ENCODE measurements at regions of chr11 and their contacts with region 1.

Region 1: GRCh38 chr11:62753736-62754603 is at the start of gene ZBTB3:
- DNase-seq: peak; percentile 99
- H3K4me3 ChIP-seq: peak within 1 kb of the TSS; percentile 68 to 98
- H3K4me3 Mint-ChIP-seq: peak within 1 kb of the TSS; percentile 96 to 99 (median 98)
- H3K27ac ChIP-seq: peak within 1 kb of the TSS; percentile 90
- H3K27ac Mint-ChIP-seq: peak within 1 kb of the TSS; percentile 94 to 100 (median 99)
- H3K4me1 ChIP-seq: peaks cover 45% of the 10 kb centered on the region
- H3K4me1 Mint-ChIP-seq: peaks cover 15 to 41% (median 25%) of the 10 kb centered on the region in 4 donors
- H3K27me3 ChIP-seq: no peaks in the 10 kb centered on the region
- H3K27me3 Mint-ChIP-seq: no peaks in the 10 kb centered on the region
- total RNA-seq, gene ZBTB3: 27.2 to 27.9 TPM

Region 2: GRCh38 chr11:62567018-62567633 is 186.8 kb before region 1 on chr11:
- CTCF ChIA-PET with region 1: no interaction called
- POLR2A ChIA-PET with region 1: no interaction called
- intact Hi-C with region 1: no loop called
- DNase-seq: no peak
- H3K4me3 ChIP-seq: no peak overlapping the region
- H3K4me3 Mint-ChIP-seq: peak overlapping the region in 2 of 8 donors; percentile 28 to 73
- H3K27ac ChIP-seq: peak overlapping the region; percentile 15
- H3K27ac Mint-ChIP-seq: peak overlapping the region; percentile 51 to 85 (median 81)
- H3K4me1 ChIP-seq: peaks cover 38% of the 10 kb centered on the region
- H3K4me1 Mint-ChIP-seq: peaks cover 25 to 51% (median 38%) of the 10 kb centered on the region in 4 donors
- H3K27me3 ChIP-seq: no peaks in the 10 kb centered on the region
- H3K27me3 Mint-ChIP-seq: no peaks in the 10 kb centered on the region

Region 3: DNA sequence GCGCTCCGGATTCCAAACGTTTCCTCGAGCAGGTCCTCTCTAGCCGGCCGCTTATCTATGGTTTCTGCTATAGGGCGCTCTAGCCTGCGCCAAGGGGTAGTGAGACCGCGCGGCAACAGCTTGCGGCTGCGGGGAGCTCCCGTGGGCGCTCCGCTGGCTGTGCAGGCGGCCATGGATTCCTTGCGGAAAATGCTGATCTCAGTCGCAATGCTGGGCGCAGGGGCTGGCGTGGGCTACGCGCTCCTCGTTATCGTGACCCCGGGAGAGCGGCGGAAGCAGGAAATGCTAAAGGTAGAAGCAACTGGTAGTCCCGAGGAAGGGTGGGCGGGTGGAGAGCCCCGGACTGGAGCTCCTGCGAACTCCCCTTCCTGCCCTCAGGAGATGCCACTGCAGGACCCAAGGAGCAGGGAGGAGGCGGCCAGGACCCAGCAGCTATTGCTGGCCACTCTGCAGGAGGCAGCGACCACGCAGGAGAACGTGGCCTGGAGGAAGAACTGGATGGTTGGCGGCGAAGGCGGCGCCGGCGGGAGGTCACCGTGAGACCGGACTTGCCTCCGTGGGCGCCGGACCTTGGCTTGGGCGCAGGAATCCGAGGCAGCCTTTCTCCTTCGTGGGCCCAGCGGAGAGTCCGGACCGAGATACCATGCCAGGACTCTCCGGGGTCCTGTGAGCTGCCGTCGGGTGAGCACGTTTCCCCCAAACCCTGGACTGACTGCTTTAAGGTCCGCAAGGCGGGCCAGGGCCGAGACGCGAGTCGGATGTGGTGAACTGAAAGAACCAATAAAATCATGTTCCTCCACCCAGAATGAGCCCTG is 82.2 kb before region 1 on chr11 and contains the starts of genes LBHD1 and UQCC3:
- CTCF ChIA-PET with region 1: no interaction called
- POLR2A ChIA-PET with region 1: interaction called, 19 read pairs
- intact Hi-C with region 1: no loop called
- DNase-seq: peak; percentile 68 to 80 (median 75)
- H3K4me3 ChIP-seq: peak within 1 kb of the TSS; percentile 91 to 97
- H3K4me3 Mint-ChIP-seq: peak within 1 kb of the TSS; percentile 93 to 99 (median 99)
- H3K27ac ChIP-seq: peak within 1 kb of the TSS; percentile 74
- H3K27ac Mint-ChIP-seq: peak within 1 kb of the TSS; percentile 89 to 98 (median 97)
- H3K4me1 ChIP-seq: peaks cover 55% of the 10 kb centered on the region
- H3K4me1 Mint-ChIP-seq: peaks cover 14 to 74% (median 43%) of the 10 kb centered on the region in 4 donors
- H3K27me3 ChIP-seq: no peaks in the 10 kb centered on the region
- H3K27me3 Mint-ChIP-seq: no peaks in the 10 kb centered on the region
- total RNA-seq, gene LBHD1: 26.7 to 28.6 TPM
- total RNA-seq, gene UQCC3: 7.2 to 8.5 TPM

Region 4: DNA sequence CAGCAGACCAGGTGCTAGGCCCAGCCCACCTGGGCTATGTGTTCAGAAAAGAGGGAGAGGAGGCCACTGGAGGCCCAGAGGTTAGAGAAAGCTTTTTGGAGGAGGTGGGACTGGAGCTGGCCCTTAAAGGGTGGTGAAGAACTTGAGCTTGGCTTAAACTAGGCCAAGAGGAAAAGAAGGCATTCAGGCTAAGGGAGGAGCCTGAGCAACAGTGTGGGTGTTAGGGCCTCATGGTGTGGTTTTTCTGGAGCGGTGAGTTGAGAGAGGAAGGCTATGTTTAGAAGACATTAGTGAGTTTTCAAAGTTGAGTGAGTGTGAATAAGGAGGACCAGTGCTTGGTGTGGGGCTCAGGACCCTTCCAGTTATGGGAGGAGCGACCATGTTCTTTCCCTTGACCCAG is 23.4 kb after region 1 on chr11:
- CTCF ChIA-PET with region 1: interaction called, 4 read pairs
- POLR2A ChIA-PET with region 1: interaction called, 62 read pairs
- intact Hi-C with region 1: no loop called
- DNase-seq: no peak
- H3K4me3 ChIP-seq: no peak overlapping the region
- H3K4me3 Mint-ChIP-seq: peak overlapping the region in 1 of 8 donors; percentile 15
- H3K27ac ChIP-seq: peak overlapping the region; percentile 0
- H3K27ac Mint-ChIP-seq: peak overlapping the region in 6 of 7 donors; percentile 18 to 88 (median 78)
- H3K4me1 ChIP-seq: peaks cover 2% of the 10 kb centered on the region
- H3K4me1 Mint-ChIP-seq: peaks cover 5 to 10% (median 8%) of the 10 kb centered on the region in 4 donors
- H3K27me3 ChIP-seq: no peaks in the 10 kb centered on the region
- H3K27me3 Mint-ChIP-seq: no peaks in the 10 kb centered on the region

Region 5: DNA sequence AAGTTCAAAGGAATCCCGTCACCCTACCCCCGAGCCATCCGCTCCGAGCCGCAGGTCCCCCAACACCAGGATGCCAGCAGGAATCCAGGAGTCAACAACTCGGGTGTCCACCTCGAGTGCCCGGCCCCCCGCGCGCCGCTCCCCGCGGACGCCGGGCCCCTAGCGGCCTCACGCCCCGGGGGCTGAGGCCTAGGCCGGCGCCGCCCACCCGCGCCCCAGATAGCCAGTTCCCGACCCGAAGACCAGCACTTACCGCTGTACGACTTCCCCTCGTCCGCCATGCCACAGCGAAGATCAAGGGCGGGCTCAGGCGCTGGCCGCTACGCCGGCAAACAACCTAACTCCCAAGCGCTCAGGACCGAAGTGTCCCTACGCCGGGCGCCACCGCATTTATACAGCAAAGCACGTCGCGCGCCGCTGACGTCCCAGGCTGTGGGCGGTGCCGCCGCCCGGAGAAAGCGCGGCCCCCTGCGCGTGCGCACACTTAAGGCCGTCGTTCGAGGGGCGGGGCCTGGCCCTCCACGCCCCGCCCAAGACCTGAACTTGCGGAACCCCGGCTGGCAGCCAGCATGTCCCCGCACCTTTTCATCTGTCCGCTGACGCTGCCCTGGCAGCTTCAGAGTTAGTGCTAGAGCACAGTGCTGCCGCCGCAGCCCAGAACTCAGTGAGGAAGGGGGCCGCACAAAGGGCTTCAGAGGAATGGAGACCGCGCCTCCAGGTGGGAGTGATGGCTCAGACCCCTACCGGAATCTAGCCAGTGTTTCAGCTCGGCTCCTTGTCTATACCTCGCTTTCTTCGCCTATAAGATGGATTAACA is 51.3 kb after region 1 on chr11 and contains the start of gene NXF1:
- CTCF ChIA-PET with region 1: no interaction called
- POLR2A ChIA-PET with region 1: interaction called, 8 read pairs
- intact Hi-C with region 1: loop called (anchors 1 kb)
- DNase-seq: peak; percentile 90 to 98 (median 96)
- H3K4me3 ChIP-seq: peak within 1 kb of the TSS; percentile 87 to 93
- H3K4me3 Mint-ChIP-seq: peak within 1 kb of the TSS; percentile 97 to 100 (median 99)
- H3K27ac ChIP-seq: peak within 1 kb of the TSS; percentile 94
- H3K27ac Mint-ChIP-seq: peak within 1 kb of the TSS; percentile 97 to 100 (median 99)
- H3K4me1 ChIP-seq: peaks cover 22% of the 10 kb centered on the region
- H3K4me1 Mint-ChIP-seq: peaks cover 20 to 43% (median 31%) of the 10 kb centered on the region in 4 donors
- H3K27me3 ChIP-seq: no peaks in the 10 kb centered on the region
- H3K27me3 Mint-ChIP-seq: peaks cover 0 to 2% of the 10 kb centered on the region in 2 donors
- total RNA-seq, gene NXF1: 195 to 196 TPM